ENCODE measurements at regions of chr12 and their contacts with region 1.

Region 1: DNA sequence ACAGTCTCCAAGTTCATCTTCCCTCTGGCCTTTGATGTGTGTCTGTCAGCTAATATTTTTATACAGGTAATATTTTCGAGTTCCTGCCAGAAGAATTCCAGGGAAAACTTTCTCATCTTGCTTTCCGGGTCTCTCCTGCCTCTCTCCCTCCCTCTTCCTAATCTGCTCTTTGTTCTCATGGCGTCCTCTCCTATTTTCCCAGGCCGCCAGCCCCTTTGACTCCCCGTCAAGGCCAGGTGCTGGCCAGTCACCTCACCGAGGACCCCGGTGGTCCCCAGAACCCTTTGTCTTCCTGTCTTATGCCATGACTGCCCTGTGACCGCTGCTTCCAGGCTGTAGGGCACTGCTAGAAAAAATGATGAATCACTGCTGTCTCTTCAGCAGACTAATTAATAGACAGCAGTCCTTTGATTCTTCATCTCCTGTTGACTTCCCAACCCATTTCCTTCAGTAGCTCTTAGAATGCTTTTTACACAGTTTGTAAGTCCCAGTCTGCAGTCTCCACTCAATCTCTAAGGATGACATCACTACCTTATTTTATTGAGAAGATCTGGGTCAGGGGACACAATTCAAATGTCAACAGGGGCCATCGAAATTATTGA is 40.7 kb downstream of the PPFIBP1 start:
- DNase-seq: no peak
- ATAC-seq: no peak
- H3K4me3 ChIP-seq: no peak overlapping the region
- H3K4me3 Mint-ChIP-seq: no peak overlapping the region
- H3K27ac ChIP-seq: no peak overlapping the region
- H3K27ac Mint-ChIP-seq: no peak overlapping the region
- H3K4me1 ChIP-seq: no peaks in the 10 kb centered on the region
- H3K4me1 Mint-ChIP-seq: no peaks in the 10 kb centered on the region
- H3K27me3 ChIP-seq: no peaks in the 10 kb centered on the region
- H3K27me3 Mint-ChIP-seq: peaks cover 3% of the 10 kb centered on the region
- CTCF ChIP-seq: no peak

Region 2: DNA sequence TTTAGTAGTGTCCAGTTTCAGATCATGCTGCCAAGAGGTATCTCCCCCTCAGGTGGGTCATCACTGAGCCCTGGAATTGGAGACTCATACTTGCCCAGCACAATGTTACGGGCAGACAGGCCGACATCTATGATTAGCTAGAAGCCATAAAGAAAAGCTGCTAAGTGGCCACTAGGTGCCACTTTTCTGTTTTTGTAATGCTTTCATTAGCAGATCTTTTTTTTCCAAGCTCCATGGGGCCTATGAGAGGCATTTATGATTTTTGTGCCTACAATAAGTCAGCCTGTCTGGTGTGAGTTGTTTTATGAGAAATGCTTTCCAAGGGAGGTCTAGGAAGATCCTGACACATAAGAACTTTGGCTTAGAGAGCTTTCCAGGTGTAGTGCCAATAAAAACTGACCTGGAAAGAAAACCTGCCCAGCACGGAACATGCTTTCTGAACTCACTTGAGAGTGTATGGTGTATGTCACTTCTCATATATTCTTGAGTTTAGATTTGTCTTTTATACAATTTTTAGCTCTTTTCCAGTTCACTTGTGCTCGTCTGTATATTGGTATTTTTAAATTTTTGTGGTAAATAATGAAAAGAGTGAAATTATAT is 140.0 kb before region 1 on chr12:
- CTCF ChIA-PET with region 1: interaction called, 3 read pairs
- POLR2A ChIA-PET with region 1: no interaction called
- intact Hi-C with region 1: loop called in 1 of 2 experiments (anchors 5 kb)
- DNase-seq: peak in 2 of 9 experiments; percentile 5 to 28
- ATAC-seq: no peak
- H3K4me3 ChIP-seq: no peak overlapping the region
- H3K4me3 Mint-ChIP-seq: no peak overlapping the region
- H3K27ac ChIP-seq: no peak overlapping the region
- H3K27ac Mint-ChIP-seq: no peak overlapping the region
- H3K4me1 ChIP-seq: no peaks in the 10 kb centered on the region
- H3K4me1 Mint-ChIP-seq: no peaks in the 10 kb centered on the region
- H3K27me3 ChIP-seq: peaks cover 0 to 2% of the 10 kb centered on the region in 2 experiments
- H3K27me3 Mint-ChIP-seq: no peaks in the 10 kb centered on the region
- CTCF ChIP-seq: no peak

Region 3: DNA sequence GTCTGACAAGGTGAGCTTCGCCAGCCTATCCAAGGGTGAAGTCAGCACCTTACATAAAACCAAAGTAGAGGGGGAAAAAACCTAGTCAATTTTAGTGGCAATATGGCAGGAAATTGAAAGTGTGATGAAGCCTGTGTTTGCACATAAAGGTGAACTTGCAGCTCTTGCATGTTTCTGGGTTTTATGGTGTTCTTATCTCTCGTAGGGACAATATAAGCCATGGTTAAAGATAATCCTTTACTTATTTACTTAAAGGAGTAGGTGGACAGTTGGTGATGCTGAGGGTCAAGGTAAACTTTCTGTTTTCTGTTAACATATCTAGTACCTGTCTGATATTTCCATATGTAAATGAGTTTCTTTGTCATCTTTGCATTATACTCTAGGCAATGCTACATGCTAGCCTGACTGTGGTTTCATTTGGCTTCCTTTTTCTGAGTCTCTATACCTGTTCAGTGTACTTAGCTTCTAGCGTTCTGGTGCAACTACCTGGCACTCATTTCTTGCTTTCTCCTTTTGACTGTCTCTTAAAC is 658.4 kb after region 1 on chr12:
- CTCF ChIA-PET with region 1: no interaction called
- POLR2A ChIA-PET with region 1: no interaction called
- intact Hi-C with region 1: no loop called
- DNase-seq: peak in 2 of 9 experiments; percentile 29 to 43
- ATAC-seq: peak; percentile 78
- H3K4me3 ChIP-seq: peak overlapping the region in 1 of 2 experiments; percentile 16
- H3K4me3 Mint-ChIP-seq: peak overlapping the region; percentile 65
- H3K27ac ChIP-seq: peak overlapping the region in 1 of 2 experiments; percentile 0
- H3K27ac Mint-ChIP-seq: peak overlapping the region; percentile 70
- H3K4me1 ChIP-seq: peaks cover 45% of the 10 kb centered on the region
- H3K4me1 Mint-ChIP-seq: peaks cover 54% of the 10 kb centered on the region
- H3K27me3 ChIP-seq: no peaks in the 10 kb centered on the region
- H3K27me3 Mint-ChIP-seq: no peaks in the 10 kb centered on the region
- CTCF ChIP-seq: no peak

Measured in CD8-positive, alpha-beta T cell (primary cell).